ENCODE measurements at regions of chr18 and their contacts with region 1.

Region 1: GRCh38 chr18:9147440-9148202 is 11.0 kb downstream of the ANKRD12 start:
- DNase-seq: peak in 1 of 2 donors; percentile 37
- ATAC-seq: peak; percentile 81 to 91 (median 87)
- H3K4me3 ChIP-seq: no peak overlapping the region
- H3K27ac ChIP-seq: peak overlapping the region in 2 of 10 donors; percentile 42 to 69
- H3K4me1 ChIP-seq: peaks cover 2 to 100% (median 80%) of the 10 kb centered on the region in 9 donors
- H3K27me3 ChIP-seq: no peaks in the 10 kb centered on the region
- CTCF ChIP-seq: peak; percentile 59 to 90 (median 79)

Region 2: GRCh38 chr18:8808001-8808400 is 339.6 kb before region 1 on chr18:
- intact Hi-C with region 1: no loop called
- DNase-seq: no peak
- ATAC-seq: no peak
- H3K4me3 ChIP-seq: no peak overlapping the region
- H3K27ac ChIP-seq: no peak overlapping the region
- H3K4me1 ChIP-seq: peaks cover 0 to 27% (median 0%) of the 10 kb centered on the region in 9 donors
- H3K27me3 ChIP-seq: no peaks in the 10 kb centered on the region
- CTCF ChIP-seq: no peak

Region 3: DNA sequence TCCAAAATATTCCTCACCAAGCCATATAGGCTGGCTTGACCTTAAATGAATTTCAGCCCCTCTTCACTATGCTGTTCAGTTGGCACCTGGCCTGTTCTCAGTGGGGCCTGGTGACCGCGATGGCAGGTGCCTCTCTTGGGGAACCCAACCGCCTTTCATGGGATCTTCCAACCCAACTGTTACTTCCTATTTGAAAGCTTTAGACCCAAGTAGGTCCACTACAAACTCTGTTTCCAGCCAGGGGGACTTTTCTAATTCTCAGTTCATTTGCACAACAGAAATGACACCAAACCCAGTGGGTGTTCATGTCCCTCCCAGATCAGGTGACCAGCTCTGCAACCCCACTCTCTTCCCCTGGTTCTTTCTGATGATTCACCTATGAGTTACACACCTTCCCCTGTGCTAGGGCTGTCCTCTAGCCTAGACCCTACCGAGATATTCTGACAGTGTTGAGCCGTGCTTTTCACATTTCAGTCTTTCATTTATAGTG is 80.8 kb before region 1 on chr18:
- intact Hi-C with region 1: loop called in 4 of 10 experiments (anchors 2 kb)
- DNase-seq: no peak
- ATAC-seq: no peak
- H3K4me3 ChIP-seq: no peak overlapping the region
- H3K27ac ChIP-seq: no peak overlapping the region
- H3K4me1 ChIP-seq: peaks cover 0 to 20% (median 7%) of the 10 kb centered on the region in 9 donors
- H3K27me3 ChIP-seq: no peaks in the 10 kb centered on the region
- CTCF ChIP-seq: no peak

Region 4: DNA sequence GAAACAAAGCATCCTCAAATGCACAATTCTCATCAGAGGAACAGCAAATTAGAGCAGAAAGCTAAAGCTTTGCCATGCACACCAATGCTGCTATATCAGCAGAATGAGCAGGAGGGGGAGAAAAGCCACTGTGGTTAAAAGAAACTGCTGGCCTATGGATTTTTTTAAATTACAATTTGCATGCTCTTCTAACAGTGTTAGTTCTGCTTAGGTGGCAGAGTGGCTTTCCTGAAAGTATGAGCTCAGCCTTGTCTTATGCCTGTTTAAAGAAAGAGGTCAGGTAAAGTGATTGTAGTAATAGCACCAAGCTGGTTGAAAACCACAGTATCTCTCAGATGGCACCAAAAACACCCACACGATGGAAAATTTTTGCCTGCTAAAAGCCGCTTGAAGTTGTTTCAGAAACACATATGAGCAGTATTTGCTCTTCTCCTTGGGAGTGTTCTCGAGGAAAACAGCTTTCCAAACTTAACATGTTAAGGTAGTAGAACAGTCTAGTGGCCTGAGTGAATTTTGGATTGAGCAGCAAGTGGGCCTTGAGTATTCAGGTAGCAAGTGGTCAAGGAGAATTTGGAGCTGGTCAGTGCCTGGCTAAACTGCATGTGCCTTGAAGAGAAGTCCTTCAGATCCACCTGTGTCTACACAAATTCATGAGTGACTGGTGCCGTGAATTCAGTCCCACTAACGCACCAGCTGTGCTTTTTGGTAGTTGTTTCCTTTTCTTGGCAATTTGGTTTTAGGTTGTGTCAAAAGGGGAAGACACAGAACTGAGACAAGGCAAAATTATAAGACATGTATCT is 64.7 kb before region 1 on chr18:
- intact Hi-C with region 1: loop called in 2 of 10 experiments (anchors 5 kb)
- DNase-seq: no peak
- ATAC-seq: peak in 2 of 8 donors; percentile 56 to 57
- H3K4me3 ChIP-seq: no peak overlapping the region
- H3K27ac ChIP-seq: peak overlapping the region in 1 of 10 donors; percentile 77
- H3K4me1 ChIP-seq: peaks cover 0 to 57% (median 0%) of the 10 kb centered on the region in 9 donors
- H3K27me3 ChIP-seq: no peaks in the 10 kb centered on the region
- CTCF ChIP-seq: no peak

Region 5: GRCh38 chr18:9226463-9226862 is 78.8 kb after region 1 on chr18:
- intact Hi-C with region 1: no loop called
- DNase-seq: no peak
- ATAC-seq: no peak
- H3K4me3 ChIP-seq: no peak overlapping the region
- H3K27ac ChIP-seq: no peak overlapping the region
- H3K4me1 ChIP-seq: no peaks in the 10 kb centered on the region
- H3K27me3 ChIP-seq: no peaks in the 10 kb centered on the region
- CTCF ChIP-seq: no peak

Region 6: DNA sequence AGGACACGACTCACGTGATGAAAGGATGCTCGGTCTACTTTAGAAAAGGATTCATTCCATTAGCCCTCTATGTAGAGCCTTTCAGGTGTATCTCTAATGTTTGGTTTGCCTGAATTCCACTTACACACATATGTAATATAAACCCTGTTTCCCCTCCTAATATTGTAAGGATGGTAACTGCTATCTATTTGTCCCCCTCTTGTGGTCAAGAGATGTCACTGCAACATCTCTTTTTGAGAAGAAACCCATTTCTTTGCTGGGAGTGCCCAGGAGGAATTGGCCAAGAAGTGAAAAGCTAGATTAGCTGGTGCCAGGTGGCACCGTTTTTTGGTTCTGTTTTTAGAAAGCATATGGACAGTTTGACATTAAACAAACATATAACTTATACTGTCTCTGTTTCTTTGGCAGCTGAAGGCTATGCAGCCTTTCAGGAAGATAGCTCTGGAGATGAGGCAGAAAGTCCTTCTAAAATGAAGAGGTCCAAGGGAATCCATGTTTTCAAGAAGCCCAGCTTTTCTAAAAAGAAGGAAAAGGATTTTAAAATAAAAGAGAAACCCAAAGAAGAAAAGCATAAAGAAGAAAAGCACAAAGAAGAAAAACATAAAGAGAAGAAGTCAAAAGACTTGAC is 368.9 kb after region 1 on chr18:
- intact Hi-C with region 1: no loop called
- DNase-seq: no peak
- ATAC-seq: peak in 5 of 8 donors; percentile 19 to 49 (median 42)
- H3K4me3 ChIP-seq: no peak overlapping the region
- H3K27ac ChIP-seq: peak overlapping the region in 1 of 10 donors; percentile 22
- H3K4me1 ChIP-seq: peaks cover 0 to 31% (median 6%) of the 10 kb centered on the region in 9 donors
- H3K27me3 ChIP-seq: no peaks in the 10 kb centered on the region
- CTCF ChIP-seq: peak; percentile 75 to 90 (median 84)

Measured in heart right ventricle (tissue), 16 donors.